WTC11 (cell line): ENCODE measurements at regions of chr11 and their contacts with region 1.

Region 1: GRCh38 chr11:8192016-8192895 is 23.4 kb upstream of the RIC3 start:
- DNase-seq: peak; percentile 84
- ATAC-seq: peak; percentile 93
- H3K4me3 Mint-ChIP-seq: no peak overlapping the region
- H3K27ac Mint-ChIP-seq: no peak overlapping the region
- H3K4me1 Mint-ChIP-seq: no peaks in the 10 kb centered on the region
- H3K27me3 Mint-ChIP-seq: peaks cover 26% of the 10 kb centered on the region
- CTCF ChIP-seq: peak; percentile 70

Region 2: GRCh38 chr11:8156877-8157276 is 35.4 kb before region 1 on chr11:
- CTCF ChIA-PET with region 1: no interaction called
- POLR2A ChIA-PET with region 1: no interaction called
- DNase-seq: no peak
- ATAC-seq: no peak
- H3K4me3 Mint-ChIP-seq: no peak overlapping the region
- H3K27ac Mint-ChIP-seq: no peak overlapping the region
- H3K4me1 Mint-ChIP-seq: peaks cover 11% of the 10 kb centered on the region
- H3K27me3 Mint-ChIP-seq: no peaks in the 10 kb centered on the region; the same call in 1 of the 2 replicates
- CTCF ChIP-seq: no peak

Region 3: GRCh38 chr11:8178297-8178696 is 14.0 kb before region 1 on chr11:
- CTCF ChIA-PET with region 1: interaction called, 11 read pairs
- POLR2A ChIA-PET with region 1: no interaction called
- DNase-seq: no peak
- ATAC-seq: no peak
- H3K4me3 Mint-ChIP-seq: no peak overlapping the region
- H3K27ac Mint-ChIP-seq: no peak overlapping the region; the same call in 1 of the 2 replicates
- H3K4me1 Mint-ChIP-seq: no peaks in the 10 kb centered on the region; the same call in 1 of the 2 replicates
- H3K27me3 Mint-ChIP-seq: peaks cover 28% of the 10 kb centered on the region
- CTCF ChIP-seq: no peak

Region 4: DNA sequence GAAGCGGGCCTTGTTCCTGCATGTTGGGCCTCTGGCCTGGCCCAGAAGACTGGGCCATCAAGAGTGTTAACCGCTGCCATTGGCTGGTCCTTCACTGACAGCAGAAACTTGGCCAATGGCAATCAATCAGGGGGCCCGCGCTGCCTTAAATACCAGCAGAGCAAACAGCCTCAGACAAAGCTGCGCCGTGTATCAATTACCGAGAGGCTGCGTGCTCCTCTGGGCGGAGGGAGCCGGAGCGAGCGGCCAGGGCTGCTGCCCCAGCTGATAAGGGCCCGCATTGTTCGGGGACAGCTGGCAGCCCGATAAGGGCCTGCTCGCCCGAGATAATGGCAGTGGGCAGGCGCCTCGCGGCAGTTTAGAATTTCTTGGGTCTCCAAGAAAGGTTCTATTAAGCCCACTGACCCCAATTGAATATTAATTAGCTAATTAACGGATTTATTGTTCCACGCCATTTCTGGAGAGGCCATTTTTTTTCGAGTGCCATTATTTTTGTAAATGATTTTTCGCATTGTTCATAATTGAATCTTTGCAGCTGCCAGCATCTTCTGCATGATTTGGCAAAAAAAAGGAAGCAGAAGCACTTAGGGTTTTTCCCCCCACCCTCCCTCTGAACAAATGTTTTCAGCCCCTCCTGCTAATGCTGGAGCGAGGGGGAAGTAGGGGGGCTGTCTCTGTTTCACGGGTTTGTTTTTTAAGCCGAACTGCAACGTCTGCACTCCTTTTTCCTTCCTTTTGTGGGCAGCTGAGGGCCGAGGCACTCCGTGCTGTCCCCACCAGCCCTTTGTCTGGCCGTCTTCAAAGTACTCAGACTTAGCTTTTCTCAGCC is 14.2 kb after region 1 on chr11:
- CTCF ChIA-PET with region 1: interaction called, 27 read pairs
- POLR2A ChIA-PET with region 1: no interaction called
- DNase-seq: no peak
- ATAC-seq: peak; percentile 74
- H3K4me3 Mint-ChIP-seq: no peak overlapping the region
- H3K27ac Mint-ChIP-seq: no peak overlapping the region
- H3K4me1 Mint-ChIP-seq: peaks cover 22% of the 10 kb centered on the region
- H3K27me3 Mint-ChIP-seq: no peaks in the 10 kb centered on the region
- CTCF ChIP-seq: no peak

Region 5: GRCh38 chr11:8219257-8220021 is 27.2 kb after region 1 on chr11:
- CTCF ChIA-PET with region 1: interaction called, 14 read pairs
- POLR2A ChIA-PET with region 1: no interaction called
- DNase-seq: peak; percentile 75
- ATAC-seq: peak; percentile 92
- H3K4me3 Mint-ChIP-seq: no peak overlapping the region
- H3K27ac Mint-ChIP-seq: no peak overlapping the region
- H3K4me1 Mint-ChIP-seq: peaks cover 12% of the 10 kb centered on the region
- H3K27me3 Mint-ChIP-seq: no peaks in the 10 kb centered on the region; the same call in 1 of the 2 replicates
- CTCF ChIP-seq: peak; percentile 54

Region 6: GRCh38 chr11:8247312-8247711 is 55.1 kb after region 1 on chr11:
- CTCF ChIA-PET with region 1: interaction called, 12 read pairs
- POLR2A ChIA-PET with region 1: no interaction called
- DNase-seq: peak; percentile 74
- ATAC-seq: peak; percentile 43
- H3K4me3 Mint-ChIP-seq: no peak overlapping the region
- H3K27ac Mint-ChIP-seq: no peak overlapping the region
- H3K4me1 Mint-ChIP-seq: peaks cover 13% of the 10 kb centered on the region
- H3K27me3 Mint-ChIP-seq: no peaks in the 10 kb centered on the region; the same call in 1 of the 2 replicates
- CTCF ChIP-seq: peak; percentile 49

Region 7: DNA sequence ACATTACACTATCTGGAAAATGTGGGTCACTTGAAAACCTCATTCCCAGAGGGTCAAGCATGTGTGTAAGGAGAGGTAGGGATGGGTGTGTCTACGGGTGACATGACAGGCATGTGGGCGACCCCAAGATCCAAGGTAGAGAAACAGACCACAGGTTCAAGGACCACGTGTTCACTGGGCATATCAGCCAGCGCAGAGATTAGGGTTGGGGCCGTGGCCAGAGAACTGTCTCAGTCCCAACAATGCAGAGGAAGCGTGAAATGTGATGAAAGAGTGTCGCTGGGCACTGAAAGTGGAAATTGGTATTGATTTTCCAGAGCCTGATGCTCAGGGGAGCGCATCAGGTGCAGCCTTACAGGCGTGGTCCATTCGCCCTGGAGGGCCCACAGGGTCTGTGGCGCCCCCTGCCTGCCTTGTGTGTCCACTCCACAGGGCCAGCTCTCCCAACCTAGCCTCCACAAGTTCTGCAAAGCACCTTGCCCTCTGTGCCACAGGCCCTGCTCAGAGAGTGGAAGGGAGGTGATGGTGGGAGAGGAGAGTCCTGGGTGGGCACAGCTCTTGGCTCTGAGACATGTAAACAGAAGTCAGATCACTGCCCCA is 126.2 kb after region 1 on chr11:
- CTCF ChIA-PET with region 1: interaction called, 23 read pairs
- POLR2A ChIA-PET with region 1: no interaction called
- DNase-seq: peak; percentile 81
- ATAC-seq: peak; percentile 97
- H3K4me3 Mint-ChIP-seq: no peak overlapping the region
- H3K27ac Mint-ChIP-seq: no peak overlapping the region
- H3K4me1 Mint-ChIP-seq: peaks cover 2% of the 10 kb centered on the region; the same call in 1 of the 2 replicates
- H3K27me3 Mint-ChIP-seq: peaks cover 7% of the 10 kb centered on the region
- CTCF ChIP-seq: peak; percentile 84